ENCODE measurements at regions of chrX and their contacts with region 1.

Region 1: GRCh38 chrX:150715184-150715583 is 22.0 kb downstream of the MTMR1 start:
- DNase-seq: peak; percentile 23
- H3K4me3 ChIP-seq: no peak overlapping the region
- H3K27ac ChIP-seq: no peak overlapping the region
- H3K4me1 ChIP-seq: no peaks in the 10 kb centered on the region
- H3K27me3 ChIP-seq: no peaks in the 10 kb centered on the region
- CTCF ChIP-seq: no peak

Region 2: DNA sequence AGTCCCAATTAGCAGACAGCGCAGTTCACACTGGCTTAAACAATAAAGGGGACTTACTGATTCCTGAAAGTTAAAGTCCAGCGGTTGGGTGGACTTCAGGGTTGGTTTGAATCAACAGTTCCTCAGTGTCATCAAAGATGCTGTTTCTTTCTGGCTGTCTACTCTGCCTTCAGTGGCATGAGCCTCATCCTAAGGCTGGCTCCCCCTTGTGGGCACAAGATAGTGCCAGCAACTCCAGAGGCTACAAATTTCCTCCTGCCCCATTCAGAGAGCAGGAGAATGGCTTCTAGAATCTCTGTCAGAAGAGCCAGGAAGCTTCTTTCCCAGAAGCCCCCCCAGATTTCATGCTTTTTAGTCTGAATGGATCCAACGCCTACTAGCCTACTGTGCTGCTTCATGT is 229.2 kb before region 1 on chrX:
- CTCF ChIA-PET with region 1: no interaction called
- dilution Hi-C with region 1: no loop called
- in situ Hi-C with region 1: no loop called
- intact Hi-C with region 1: loop called (anchors 2 kb)
- DNase-seq: peak; percentile 30
- H3K4me3 ChIP-seq: no peak overlapping the region
- H3K27ac ChIP-seq: no peak overlapping the region
- H3K4me1 ChIP-seq: peaks cover 8% of the 10 kb centered on the region
- H3K27me3 ChIP-seq: no peaks in the 10 kb centered on the region
- CTCF ChIP-seq: peak; percentile 50 to 66

Region 3: GRCh38 chrX:150683536-150684146 is 31.5 kb before region 1 on chrX:
- CTCF ChIA-PET with region 1: no interaction called
- dilution Hi-C with region 1: no loop called
- in situ Hi-C with region 1: no loop called
- intact Hi-C with region 1: loop called (anchors 1 kb)
- DNase-seq: peak; percentile 27
- H3K4me3 ChIP-seq: no peak overlapping the region
- H3K27ac ChIP-seq: no peak overlapping the region
- H3K4me1 ChIP-seq: peaks cover 8% of the 10 kb centered on the region
- H3K27me3 ChIP-seq: no peaks in the 10 kb centered on the region
- CTCF ChIP-seq: peak; percentile 34 to 53

Measured in mammary epithelial cell (primary cell).